ENCODE measurements at regions of chr3 and their contacts with region 1.

Region 1: DNA sequence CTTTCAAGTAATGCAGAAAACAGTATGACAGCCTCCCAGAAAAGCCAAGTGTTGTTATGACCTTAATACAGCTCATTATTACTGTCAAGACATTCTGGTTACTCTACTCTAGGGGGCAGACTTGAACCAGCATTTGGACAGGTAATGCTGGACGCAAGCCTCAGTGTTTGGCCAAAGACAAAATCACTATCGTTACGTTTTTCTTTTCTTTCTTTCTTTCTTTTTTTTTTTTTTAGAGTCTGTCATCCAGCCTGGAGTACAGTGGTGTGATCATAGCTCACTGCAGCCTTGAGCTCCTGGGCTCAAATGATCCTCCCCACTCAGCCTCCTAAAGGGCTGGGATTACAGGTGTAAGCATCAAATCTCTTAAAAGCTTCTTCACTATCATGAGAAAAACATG is 29.4 kb upstream of the TMEM45A start:
- DNase-seq: peak; percentile 62
- H3K4me3 ChIP-seq: no peak overlapping the region
- H3K27ac ChIP-seq: no peak overlapping the region
- H3K4me1 ChIP-seq: no peaks in the 10 kb centered on the region
- H3K27me3 ChIP-seq: no peaks in the 10 kb centered on the region
- CTCF ChIP-seq: peak; percentile 69 to 82

Region 2: DNA sequence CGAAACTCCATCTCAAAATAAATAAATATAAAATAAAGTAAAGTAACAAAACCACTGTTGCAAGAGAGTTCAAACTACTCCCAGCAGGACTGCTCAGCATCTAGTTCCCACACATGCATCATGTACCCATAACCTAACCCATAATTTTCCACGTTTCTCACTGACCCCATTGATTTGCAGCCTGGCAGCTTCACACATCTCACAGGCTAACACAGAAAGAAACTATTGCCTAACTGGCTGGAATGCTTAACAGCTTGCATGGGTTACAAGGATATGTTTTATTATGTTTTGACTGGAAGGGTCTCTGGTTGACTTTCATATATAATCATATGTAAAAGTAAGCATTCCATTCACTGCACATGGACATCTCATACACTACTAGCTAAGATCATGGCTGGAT is 257.8 kb before region 1 on chr3:
- CTCF ChIA-PET with region 1: no interaction called
- dilution Hi-C with region 1: no loop called
- in situ Hi-C with region 1: no loop called
- intact Hi-C with region 1: no loop called
- DNase-seq: no peak
- H3K4me3 ChIP-seq: no peak overlapping the region
- H3K27ac ChIP-seq: no peak overlapping the region
- H3K4me1 ChIP-seq: no peaks in the 10 kb centered on the region
- H3K27me3 ChIP-seq: peaks cover 2% of the 10 kb centered on the region
- CTCF ChIP-seq: no peak

Region 3: GRCh38 chr3:100316641-100317069 is 146.3 kb before region 1 on chr3:
- CTCF ChIA-PET with region 1: no interaction called
- dilution Hi-C with region 1: no loop called
- in situ Hi-C with region 1: no loop called
- intact Hi-C with region 1: loop called (anchors 1 kb)
- DNase-seq: peak; percentile 45
- H3K4me3 ChIP-seq: no peak overlapping the region
- H3K27ac ChIP-seq: no peak overlapping the region
- H3K4me1 ChIP-seq: no peaks in the 10 kb centered on the region
- H3K27me3 ChIP-seq: no peaks in the 10 kb centered on the region
- CTCF ChIP-seq: peak; percentile 62 to 67

Region 4: DNA sequence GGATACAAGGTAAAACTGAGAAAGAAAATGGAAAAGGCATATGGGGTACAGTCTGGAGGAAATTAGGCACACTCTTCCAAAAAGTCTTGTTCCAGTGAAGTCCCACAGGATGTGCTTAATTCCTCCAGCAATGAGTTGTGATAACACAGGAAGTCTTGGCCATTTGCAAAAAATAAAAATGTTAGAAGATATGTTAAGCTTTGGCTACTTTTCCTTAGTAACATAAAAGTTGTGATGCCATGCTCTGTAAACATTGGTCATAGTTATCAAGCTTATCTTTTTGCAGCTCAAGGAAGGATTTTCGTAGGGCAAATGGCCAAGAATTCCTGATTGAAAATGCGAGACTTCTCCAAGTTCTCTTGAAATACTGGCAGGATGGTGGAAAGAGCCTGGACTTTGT is 35.3 kb before region 1 on chr3:
- CTCF ChIA-PET with region 1: no interaction called
- dilution Hi-C with region 1: no loop called
- in situ Hi-C with region 1: no loop called
- intact Hi-C with region 1: no loop called
- DNase-seq: no peak
- H3K4me3 ChIP-seq: no peak overlapping the region
- H3K27ac ChIP-seq: no peak overlapping the region
- H3K4me1 ChIP-seq: peaks cover 16% of the 10 kb centered on the region
- H3K27me3 ChIP-seq: no peaks in the 10 kb centered on the region
- CTCF ChIP-seq: no peak

Region 5: GRCh38 chr3:100492059-100493006 is 29.3 kb after region 1 on chr3 and contains the start of gene TMEM45A:
- CTCF ChIA-PET with region 1: no interaction called
- dilution Hi-C with region 1: no loop called
- in situ Hi-C with region 1: no loop called
- intact Hi-C with region 1: loop called (anchors 1 kb)
- DNase-seq: peak; percentile 94
- H3K4me3 ChIP-seq: peak within 1 kb of the TSS; percentile 57 to 96 (median 70)
- H3K27ac ChIP-seq: peak within 1 kb of the TSS; percentile 81
- H3K4me1 ChIP-seq: peaks cover 22% of the 10 kb centered on the region
- H3K27me3 ChIP-seq: no peaks in the 10 kb centered on the region
- CTCF ChIP-seq: no peak
- total RNA-seq, gene TMEM45A: 22.4 to 39.2 TPM

Region 6: GRCh38 chr3:100590114-100590839 is 127.3 kb after region 1 on chr3:
- CTCF ChIA-PET with region 1: interaction called, 34 read pairs
- dilution Hi-C with region 1: loop called (anchors 5 kb)
- in situ Hi-C with region 1: loop called (anchors 5 kb)
- intact Hi-C with region 1: loop called (anchors 1 kb)
- DNase-seq: peak; percentile 59
- H3K4me3 ChIP-seq: no peak overlapping the region
- H3K27ac ChIP-seq: peak overlapping the region; percentile 2
- H3K4me1 ChIP-seq: no peaks in the 10 kb centered on the region
- H3K27me3 ChIP-seq: no peaks in the 10 kb centered on the region
- CTCF ChIP-seq: peak; percentile 85 to 86

Region 7: GRCh38 chr3:100634493-100635272 is 171.7 kb after region 1 on chr3:
- CTCF ChIA-PET with region 1: interaction called, 60 read pairs
- dilution Hi-C with region 1: no loop called
- in situ Hi-C with region 1: no loop called
- intact Hi-C with region 1: loop called (anchors 1 kb)
- DNase-seq: peak; percentile 78
- H3K4me3 ChIP-seq: no peak overlapping the region
- H3K27ac ChIP-seq: no peak overlapping the region
- H3K4me1 ChIP-seq: peaks cover 16% of the 10 kb centered on the region
- H3K27me3 ChIP-seq: no peaks in the 10 kb centered on the region
- CTCF ChIP-seq: peak; percentile 20 to 51

Region 8: GRCh38 chr3:100796556-100796955 is 333.6 kb after region 1 on chr3:
- CTCF ChIA-PET with region 1: interaction called, 7 read pairs
- dilution Hi-C with region 1: no loop called
- in situ Hi-C with region 1: no loop called
- intact Hi-C with region 1: loop called (anchors 5 kb)
- DNase-seq: peak; percentile 19
- H3K4me3 ChIP-seq: no peak overlapping the region
- H3K27ac ChIP-seq: no peak overlapping the region
- H3K4me1 ChIP-seq: peaks cover 8% of the 10 kb centered on the region
- H3K27me3 ChIP-seq: no peaks in the 10 kb centered on the region
- CTCF ChIP-seq: peak; percentile 30 to 45